Naive thymus-derived CD4-positive, alpha-beta T cell (primary cell): ENCODE measurements at regions of chr14 and their contacts with region 1.

Region 1: DNA sequence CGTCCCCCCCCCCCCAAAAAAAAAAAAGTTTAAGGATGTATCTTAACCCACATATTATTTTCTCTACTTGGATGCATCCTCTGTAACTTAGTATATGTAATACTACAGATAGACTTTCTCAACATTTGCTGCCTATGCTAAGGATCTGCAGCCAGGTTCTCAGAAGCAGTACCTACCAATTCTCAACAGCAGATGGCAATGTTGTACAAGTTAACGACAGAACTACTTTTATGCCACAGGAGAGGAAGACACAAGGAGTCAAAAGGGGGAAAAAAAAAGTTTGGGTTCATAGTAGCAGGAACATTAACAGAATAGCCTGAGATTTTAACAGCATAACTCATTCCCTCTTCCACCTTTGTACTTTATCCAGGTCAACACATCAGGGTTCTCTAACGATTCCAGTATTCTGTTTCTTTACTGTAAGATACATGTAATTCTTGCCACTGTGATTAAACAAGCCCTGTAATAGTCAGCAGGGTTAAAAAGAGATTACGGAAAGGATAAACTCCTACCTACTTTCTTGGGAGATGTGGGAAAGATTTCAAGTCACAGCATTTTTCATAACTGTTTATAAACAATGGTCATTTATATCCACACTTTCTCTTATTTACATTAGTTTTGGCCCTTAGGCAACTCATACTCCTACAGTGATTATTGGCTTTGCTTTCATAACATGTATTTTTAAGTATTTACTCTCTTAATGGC is 5.7 kb upstream of the NEK9 start:
- DNase-seq: peak in 7 of 9 donors; percentile 49 to 78 (median 72)
- ATAC-seq: peak; percentile 93
- H3K4me3 ChIP-seq: no peak overlapping the region
- H3K4me3 Mint-ChIP-seq: no peak overlapping the region
- H3K27ac ChIP-seq: no peak overlapping the region
- H3K27ac Mint-ChIP-seq: peak overlapping the region in 5 of 9 donors; percentile 19 to 83 (median 65)
- H3K4me1 ChIP-seq: peaks cover 0 to 3% of the 10 kb centered on the region in 2 donors
- H3K4me1 Mint-ChIP-seq: peaks cover 8 to 24% (median 20%) of the 10 kb centered on the region in 7 donors
- H3K27me3 ChIP-seq: no peaks in the 10 kb centered on the region
- H3K27me3 Mint-ChIP-seq: no peaks in the 10 kb centered on the region

Region 2: DNA sequence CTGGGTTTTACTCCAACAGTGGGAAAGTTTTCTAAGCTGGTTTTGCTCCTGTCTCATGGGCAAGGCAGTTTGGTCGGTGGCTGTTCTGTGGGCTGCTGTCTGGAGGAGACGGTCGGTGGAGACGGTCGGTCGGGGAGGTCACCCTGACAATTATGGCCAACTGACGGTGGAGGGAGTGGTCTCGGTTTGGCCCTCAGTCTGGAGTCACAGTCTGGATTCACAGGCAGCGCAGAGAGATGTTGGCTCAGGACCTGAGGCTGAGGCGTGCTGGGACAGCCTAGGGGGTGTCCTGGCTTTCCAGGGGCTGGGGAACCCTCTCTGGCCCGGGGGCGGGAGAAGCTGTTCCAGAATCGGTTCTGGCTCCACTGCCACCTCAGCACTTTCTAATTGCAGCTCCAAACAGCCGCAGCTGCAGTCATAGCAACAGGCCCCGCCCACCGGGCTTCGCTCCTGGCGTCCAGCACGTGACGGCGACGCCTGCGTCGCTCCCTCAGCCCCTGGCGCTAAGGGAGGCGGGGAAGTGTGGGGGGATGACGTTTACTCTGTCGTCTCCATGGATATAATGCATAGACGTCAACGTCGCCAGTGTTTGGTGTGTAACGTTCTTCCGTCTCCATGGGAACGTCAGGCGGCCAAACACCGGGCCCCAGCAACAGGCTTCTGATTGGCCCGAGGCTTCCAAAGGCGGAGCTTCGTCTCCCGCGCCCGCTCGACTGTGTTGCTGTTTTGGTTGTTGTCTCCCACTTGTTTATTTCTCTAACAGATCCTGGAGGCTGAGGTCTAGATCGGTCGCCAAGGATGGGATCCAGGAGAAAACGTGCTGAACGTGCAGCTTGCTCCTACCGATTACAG is 126.3 kb after region 1 on chr14:
- CTCF ChIA-PET with region 1: no interaction called
- POLR2A ChIA-PET with region 1: no interaction called
- intact Hi-C with region 1: loop called in 1 of 2 experiments (anchors 1 kb)
- DNase-seq: peak; percentile 97 to 100 (median 100)
- ATAC-seq: peak; percentile 94
- H3K4me3 ChIP-seq: peak overlapping the region; percentile 75
- H3K4me3 Mint-ChIP-seq: peak overlapping the region; percentile 75 to 95 (median 92)
- H3K27ac ChIP-seq: peak overlapping the region; percentile 94
- H3K27ac Mint-ChIP-seq: peak overlapping the region; percentile 98 to 100 (median 100)
- H3K4me1 ChIP-seq: peaks cover 16 to 19% of the 10 kb centered on the region in 2 donors
- H3K4me1 Mint-ChIP-seq: peaks cover 14 to 50% (median 32%) of the 10 kb centered on the region in 7 donors
- H3K27me3 ChIP-seq: peaks cover 0 to 3% of the 10 kb centered on the region in 2 donors
- H3K27me3 Mint-ChIP-seq: peaks cover 0 to 74% (median 0%) of the 10 kb centered on the region in 5 donors

Region 3: DNA sequence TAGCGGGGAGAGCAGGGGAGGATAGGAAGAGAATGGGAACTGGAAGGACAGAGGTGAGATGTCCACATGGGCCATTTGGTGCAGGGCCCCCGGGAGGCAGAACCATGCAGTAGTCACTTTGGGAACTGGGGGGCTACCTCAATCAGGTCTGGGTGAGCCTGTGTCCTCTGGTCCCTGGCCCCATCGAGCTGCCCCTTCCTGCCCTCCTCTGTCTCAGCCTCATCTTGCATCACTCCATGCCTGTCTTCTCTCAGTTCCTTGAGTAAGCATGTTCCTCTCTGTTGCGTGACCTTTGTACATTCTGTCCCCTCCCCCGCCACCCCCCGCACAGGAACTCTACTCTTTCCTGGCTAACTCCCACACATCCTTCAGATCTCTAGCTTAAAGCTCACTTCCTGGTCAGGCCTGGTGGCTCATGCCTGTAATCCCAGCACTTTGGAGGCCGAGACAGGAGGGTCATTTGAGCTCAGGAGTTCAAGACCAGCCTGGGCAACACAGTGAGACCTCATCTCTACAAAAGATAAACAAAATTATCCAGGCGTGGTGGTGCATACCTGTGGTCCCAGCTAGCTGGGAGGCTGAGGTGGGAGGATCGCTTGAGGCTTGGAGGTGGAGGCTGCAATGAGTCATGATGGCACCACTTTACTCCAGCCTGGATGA is 169.3 kb after region 1 on chr14:
- CTCF ChIA-PET with region 1: interaction called, 40 read pairs
- POLR2A ChIA-PET with region 1: interaction called, 4 read pairs
- intact Hi-C with region 1: loop called (anchors 1 kb)
- DNase-seq: peak in 1 of 9 donors; percentile 40
- ATAC-seq: peak; percentile 45
- H3K4me3 ChIP-seq: no peak overlapping the region
- H3K4me3 Mint-ChIP-seq: peak overlapping the region in 3 of 10 donors; percentile 17 to 48 (median 41)
- H3K27ac ChIP-seq: no peak overlapping the region
- H3K27ac Mint-ChIP-seq: peak overlapping the region in 7 of 9 donors; percentile 24 to 82 (median 38)
- H3K4me1 ChIP-seq: peaks cover 0 to 9% of the 10 kb centered on the region in 2 donors
- H3K4me1 Mint-ChIP-seq: peaks cover 15 to 26% (median 22%) of the 10 kb centered on the region in 7 donors
- H3K27me3 ChIP-seq: no peaks in the 10 kb centered on the region
- H3K27me3 Mint-ChIP-seq: peaks cover 0 to 6% (median 0%) of the 10 kb centered on the region in 5 donors

Region 4: DNA sequence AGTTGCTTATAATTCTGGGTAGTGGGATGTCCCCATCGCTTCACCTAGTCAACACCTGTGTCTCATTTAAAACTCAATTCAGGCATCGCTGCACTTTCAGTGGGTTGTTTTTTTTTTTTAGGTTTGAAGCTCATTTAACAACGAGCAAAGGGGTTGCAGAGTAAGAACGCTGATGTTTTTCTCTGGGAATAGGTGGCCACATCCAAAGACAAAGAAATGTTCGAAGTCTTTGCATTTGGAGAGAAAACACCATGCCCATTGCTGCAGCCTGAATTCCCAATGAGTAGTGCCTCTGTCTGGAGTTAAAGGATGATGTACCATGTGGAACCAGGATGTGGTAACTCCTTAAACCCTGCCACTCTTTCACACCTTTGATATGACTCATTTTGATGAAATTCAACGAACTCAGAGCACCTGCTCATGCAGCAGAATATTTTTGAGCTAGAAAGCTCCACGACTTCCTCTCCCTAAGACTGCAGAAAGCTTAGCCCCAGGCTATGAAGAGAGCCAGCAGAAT is 354.7 kb after region 1 on chr14:
- CTCF ChIA-PET with region 1: interaction called, 7 read pairs
- POLR2A ChIA-PET with region 1: no interaction called
- intact Hi-C with region 1: loop called in 1 of 2 experiments (anchors 1 kb)
- DNase-seq: no peak
- ATAC-seq: peak; percentile 20
- H3K4me3 ChIP-seq: no peak overlapping the region
- H3K4me3 Mint-ChIP-seq: peak overlapping the region in 1 of 10 donors; percentile 65
- H3K27ac ChIP-seq: no peak overlapping the region
- H3K27ac Mint-ChIP-seq: peak overlapping the region in 2 of 9 donors; percentile 38 to 47
- H3K4me1 ChIP-seq: peaks cover 0 to 9% of the 10 kb centered on the region in 2 donors
- H3K4me1 Mint-ChIP-seq: peaks cover 4 to 31% (median 8%) of the 10 kb centered on the region in 7 donors
- H3K27me3 ChIP-seq: no peaks in the 10 kb centered on the region
- H3K27me3 Mint-ChIP-seq: peaks cover 0 to 2% (median 0%) of the 10 kb centered on the region in 5 donors

Region 5: DNA sequence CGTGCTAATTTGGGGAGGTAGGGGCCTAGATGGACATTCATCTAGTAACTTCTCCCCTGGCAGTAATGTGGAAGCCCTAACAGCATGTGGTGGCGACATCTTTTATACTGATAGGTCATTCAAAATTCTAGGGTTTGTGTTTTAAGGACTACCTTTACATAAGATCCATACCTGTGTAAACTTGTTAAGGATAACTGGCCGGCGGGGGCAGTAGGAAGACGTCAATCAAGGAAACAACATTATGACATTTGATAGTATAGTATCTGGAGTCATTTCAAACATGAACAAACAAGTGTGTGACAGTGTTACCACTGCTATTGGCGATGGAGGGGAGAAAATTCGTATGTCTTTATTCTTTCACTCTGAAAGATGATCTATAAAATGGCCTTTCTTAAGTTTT is 648.6 kb after region 1 on chr14:
- CTCF ChIA-PET with region 1: no interaction called
- POLR2A ChIA-PET with region 1: no interaction called
- intact Hi-C with region 1: no loop called
- DNase-seq: no peak
- ATAC-seq: no peak
- H3K4me3 ChIP-seq: no peak overlapping the region
- H3K4me3 Mint-ChIP-seq: no peak overlapping the region
- H3K27ac ChIP-seq: no peak overlapping the region
- H3K27ac Mint-ChIP-seq: no peak overlapping the region
- H3K4me1 ChIP-seq: no peaks in the 10 kb centered on the region
- H3K4me1 Mint-ChIP-seq: peaks cover 0 to 6% (median 0%) of the 10 kb centered on the region in 7 donors
- H3K27me3 ChIP-seq: no peaks in the 10 kb centered on the region
- H3K27me3 Mint-ChIP-seq: no peaks in the 10 kb centered on the region